ENCODE measurements at regions of chr10 and their contacts with region 1.

Region 1: DNA sequence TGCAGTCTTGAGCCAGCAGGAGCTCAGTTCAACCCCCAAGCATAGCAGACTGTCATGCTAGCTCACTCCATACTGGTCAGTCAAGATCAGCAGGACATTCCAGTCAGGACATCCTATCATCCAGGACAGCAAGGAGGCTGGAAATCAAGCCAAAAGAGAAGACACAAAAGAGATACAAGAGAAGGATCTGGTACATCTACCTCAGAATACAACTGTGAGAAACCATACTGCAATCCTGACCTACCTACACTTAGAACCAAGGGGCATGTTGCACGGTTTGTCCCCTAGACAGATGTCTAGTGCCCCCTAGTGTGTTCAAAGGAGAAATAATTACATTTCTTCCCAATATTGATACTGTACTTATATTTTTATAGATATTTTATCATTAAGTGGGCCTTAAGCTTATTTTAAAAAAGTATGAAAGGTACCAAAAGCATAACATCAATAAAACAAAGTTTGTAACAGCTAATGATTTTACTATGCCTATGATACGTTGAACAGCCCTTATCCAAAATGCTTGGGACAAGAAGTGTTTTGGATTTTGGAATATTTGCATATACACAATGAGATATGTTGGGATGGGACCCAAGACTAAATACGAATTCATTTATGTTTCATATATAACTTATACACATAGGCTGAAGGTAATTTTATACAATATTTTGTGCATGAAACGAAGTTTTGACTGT is 26.7 kb downstream of the ERCC6 start:
- DNase-seq: no peak
- H3K4me3 Mint-ChIP-seq: no peak overlapping the region
- H3K27ac Mint-ChIP-seq: no peak overlapping the region
- H3K4me1 Mint-ChIP-seq: peaks cover 21% of the 10 kb centered on the region
- H3K27me3 Mint-ChIP-seq: peaks cover 2% of the 10 kb centered on the region

Region 2: DNA sequence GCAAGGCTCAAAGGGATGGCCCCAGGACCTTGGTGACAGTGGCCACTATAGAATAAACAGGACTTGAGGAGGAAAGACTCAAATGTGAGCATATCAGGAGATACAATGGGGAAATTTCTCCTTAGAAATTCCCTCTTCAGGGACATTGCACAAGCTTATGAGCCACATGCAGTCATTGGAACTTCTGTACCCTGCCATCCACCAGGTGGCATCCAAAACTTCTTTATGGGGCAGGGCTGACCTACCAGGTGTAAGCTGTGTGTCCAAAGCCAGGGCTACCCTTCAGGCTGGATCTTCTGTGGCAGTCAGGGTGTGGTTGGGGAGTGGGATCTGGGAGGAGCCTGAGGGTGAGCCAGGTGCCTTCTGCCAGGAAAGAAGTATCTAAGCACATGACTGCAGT is 536.1 kb before region 1 on chr10:
- CTCF ChIA-PET with region 1: interaction called, 22 read pairs
- POLR2A ChIA-PET with region 1: no interaction called
- intact Hi-C with region 1: loop called (anchors 1 kb)
- DNase-seq: no peak
- H3K4me3 Mint-ChIP-seq: no peak overlapping the region
- H3K27ac Mint-ChIP-seq: no peak overlapping the region
- H3K4me1 Mint-ChIP-seq: no peaks in the 10 kb centered on the region
- H3K27me3 Mint-ChIP-seq: peaks cover 8% of the 10 kb centered on the region

Region 3: GRCh38 chr10:48981310-48981907 is 530.9 kb before region 1 on chr10:
- CTCF ChIA-PET with region 1: interaction called, 22 read pairs
- POLR2A ChIA-PET with region 1: no interaction called
- intact Hi-C with region 1: loop called (anchors 1 kb)
- DNase-seq: peak; percentile 65
- H3K4me3 Mint-ChIP-seq: no peak overlapping the region
- H3K27ac Mint-ChIP-seq: no peak overlapping the region
- H3K4me1 Mint-ChIP-seq: no peaks in the 10 kb centered on the region
- H3K27me3 Mint-ChIP-seq: no peaks in the 10 kb centered on the region

Region 4: GRCh38 chr10:49407552-49408137 is 104.6 kb before region 1 on chr10:
- CTCF ChIA-PET with region 1: interaction called, 114 read pairs
- POLR2A ChIA-PET with region 1: no interaction called
- intact Hi-C with region 1: loop called (anchors 1 kb)
- DNase-seq: peak; percentile 79
- H3K4me3 Mint-ChIP-seq: no peak overlapping the region
- H3K27ac Mint-ChIP-seq: no peak overlapping the region
- H3K4me1 Mint-ChIP-seq: no peaks in the 10 kb centered on the region
- H3K27me3 Mint-ChIP-seq: peaks cover 27% of the 10 kb centered on the region

Region 5: GRCh38 chr10:49500418-49500817 is 11.8 kb before region 1 on chr10:
- CTCF ChIA-PET with region 1: interaction called, 12 read pairs
- POLR2A ChIA-PET with region 1: no interaction called
- intact Hi-C with region 1: no loop called
- DNase-seq: no peak
- H3K4me3 Mint-ChIP-seq: no peak overlapping the region
- H3K27ac Mint-ChIP-seq: no peak overlapping the region
- H3K4me1 Mint-ChIP-seq: peaks cover 8% of the 10 kb centered on the region
- H3K27me3 Mint-ChIP-seq: no peaks in the 10 kb centered on the region

Region 6: GRCh38 chr10:49526619-49527018 is 14.4 kb after region 1 on chr10:
- CTCF ChIA-PET with region 1: interaction called, 12 read pairs
- POLR2A ChIA-PET with region 1: no interaction called
- intact Hi-C with region 1: no loop called
- DNase-seq: no peak
- H3K4me3 Mint-ChIP-seq: no peak overlapping the region
- H3K27ac Mint-ChIP-seq: no peak overlapping the region
- H3K4me1 Mint-ChIP-seq: peaks cover 4% of the 10 kb centered on the region
- H3K27me3 Mint-ChIP-seq: no peaks in the 10 kb centered on the region

Region 7: GRCh38 chr10:49558190-49558589 is 45.9 kb after region 1 on chr10:
- CTCF ChIA-PET with region 1: no interaction called
- POLR2A ChIA-PET with region 1: no interaction called
- intact Hi-C with region 1: no loop called
- DNase-seq: no peak
- H3K4me3 Mint-ChIP-seq: no peak overlapping the region
- H3K27ac Mint-ChIP-seq: no peak overlapping the region
- H3K4me1 Mint-ChIP-seq: no peaks in the 10 kb centered on the region
- H3K27me3 Mint-ChIP-seq: peaks cover 26% of the 10 kb centered on the region

Region 8: DNA sequence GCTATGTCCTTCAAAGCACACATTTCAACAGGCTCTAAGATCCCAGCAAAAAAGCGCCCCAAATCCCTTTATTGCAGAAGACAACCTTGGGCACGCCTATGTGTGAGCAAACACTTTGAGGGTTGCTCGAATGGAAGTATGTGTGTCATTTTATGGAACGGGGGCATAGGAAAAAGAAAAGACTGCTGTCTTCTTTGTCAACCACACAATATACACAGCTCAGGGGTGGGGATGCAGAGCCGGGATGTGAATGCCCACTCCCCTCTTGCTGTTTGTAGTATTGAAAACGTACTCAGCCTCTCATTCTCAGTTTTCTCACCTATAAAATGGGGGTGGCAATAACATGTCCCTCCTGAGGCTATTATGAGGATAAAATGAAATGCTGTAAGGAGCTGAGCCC is 199.3 kb after region 1 on chr10:
- CTCF ChIA-PET with region 1: no interaction called
- POLR2A ChIA-PET with region 1: no interaction called
- intact Hi-C with region 1: no loop called
- DNase-seq: no peak
- H3K4me3 Mint-ChIP-seq: no peak overlapping the region
- H3K27ac Mint-ChIP-seq: no peak overlapping the region
- H3K4me1 Mint-ChIP-seq: no peaks in the 10 kb centered on the region
- H3K27me3 Mint-ChIP-seq: peaks cover 14% of the 10 kb centered on the region

Region 9: GRCh38 chr10:49791100-49791499 is 278.8 kb after region 1 on chr10:
- CTCF ChIA-PET with region 1: no interaction called
- POLR2A ChIA-PET with region 1: no interaction called
- intact Hi-C with region 1: no loop called
- DNase-seq: no peak
- H3K4me3 Mint-ChIP-seq: no peak overlapping the region
- H3K27ac Mint-ChIP-seq: no peak overlapping the region
- H3K4me1 Mint-ChIP-seq: no peaks in the 10 kb centered on the region
- H3K27me3 Mint-ChIP-seq: peaks cover 4% of the 10 kb centered on the region

Region 10: DNA sequence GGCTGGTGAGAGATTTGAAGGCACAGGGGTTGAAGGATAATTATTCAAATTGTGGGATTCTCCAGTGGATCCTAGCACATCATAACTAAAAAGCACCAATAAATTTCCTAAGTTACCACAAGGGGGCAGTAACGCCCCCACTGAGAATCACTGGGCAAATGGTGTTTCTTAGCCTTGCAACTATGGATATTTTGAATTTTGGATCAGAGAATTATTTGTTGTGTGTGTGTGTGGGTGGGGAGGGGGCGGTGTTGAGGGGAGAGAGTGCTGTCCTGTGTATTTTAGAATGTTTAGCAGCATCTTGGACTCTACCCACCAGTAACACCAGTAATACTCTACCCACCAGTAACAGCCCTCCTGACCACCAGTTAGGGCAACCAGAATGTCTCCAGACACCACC is 1498.7 kb after region 1 on chr10:
- CTCF ChIA-PET with region 1: no interaction called
- POLR2A ChIA-PET with region 1: no interaction called
- intact Hi-C with region 1: no loop called
- DNase-seq: peak; percentile 12
- H3K4me3 Mint-ChIP-seq: no peak overlapping the region
- H3K27ac Mint-ChIP-seq: no peak overlapping the region
- H3K4me1 Mint-ChIP-seq: no peaks in the 10 kb centered on the region
- H3K27me3 Mint-ChIP-seq: peaks cover 14% of the 10 kb centered on the region

Measured in activated CD4-positive, alpha-beta memory T cell treated with anti-CD3 and anti-CD28 coated beads for 36 hours (primary cell).